GM13976 (cell line): ENCODE measurements at regions of chr4 and their contacts with region 1.

Region 1: GRCh38 chr4:154618708-154619315 is 6.4 kb upstream of the FGG start:
- DNase-seq: peak; percentile 35
- CTCF ChIP-seq: peak; percentile 50

Region 2: DNA sequence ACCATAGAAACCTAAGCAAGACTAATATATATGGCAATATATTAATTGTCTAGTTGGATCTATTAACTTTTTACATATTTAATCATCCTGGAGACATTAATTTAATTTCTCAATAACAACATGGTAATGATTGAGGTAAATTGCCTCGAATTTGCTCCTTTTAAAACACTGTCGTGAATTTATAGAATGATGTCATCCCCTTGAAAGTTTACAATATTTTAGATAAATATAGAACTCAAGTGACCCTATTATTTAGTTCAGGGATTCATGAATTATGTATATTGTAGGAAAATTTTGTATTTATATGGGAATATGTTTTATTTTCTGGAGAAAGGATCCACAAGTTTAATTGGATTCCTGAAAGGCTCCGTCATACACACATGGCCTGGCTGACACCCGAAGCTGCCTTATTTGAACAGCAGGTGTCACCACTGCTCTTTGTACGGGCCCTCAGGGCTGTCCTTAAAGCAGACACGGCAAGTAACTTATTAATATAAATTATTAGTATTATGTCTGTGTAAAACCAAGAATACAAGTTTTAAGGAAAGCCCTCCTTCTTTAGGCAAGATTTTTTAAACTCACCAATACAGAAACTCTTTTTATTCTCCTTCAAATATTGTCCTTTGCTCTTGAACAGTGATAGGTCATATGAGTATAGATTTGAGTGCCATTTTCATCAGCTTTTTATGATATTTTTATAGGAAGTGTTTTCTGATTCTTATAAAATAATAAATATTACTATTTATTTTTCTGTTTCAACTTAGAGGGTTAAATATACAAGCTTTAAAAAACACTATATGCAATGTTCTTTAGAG is 66.7 kb before region 1 on chr4:
- in situ Hi-C with region 1: loop called (anchors 5 kb)
- DNase-seq: peak; percentile 56
- CTCF ChIP-seq: peak; percentile 75